PC-9 (cell line): ENCODE measurements at regions of chr3 and their contacts with region 1.

Region 1: DNA sequence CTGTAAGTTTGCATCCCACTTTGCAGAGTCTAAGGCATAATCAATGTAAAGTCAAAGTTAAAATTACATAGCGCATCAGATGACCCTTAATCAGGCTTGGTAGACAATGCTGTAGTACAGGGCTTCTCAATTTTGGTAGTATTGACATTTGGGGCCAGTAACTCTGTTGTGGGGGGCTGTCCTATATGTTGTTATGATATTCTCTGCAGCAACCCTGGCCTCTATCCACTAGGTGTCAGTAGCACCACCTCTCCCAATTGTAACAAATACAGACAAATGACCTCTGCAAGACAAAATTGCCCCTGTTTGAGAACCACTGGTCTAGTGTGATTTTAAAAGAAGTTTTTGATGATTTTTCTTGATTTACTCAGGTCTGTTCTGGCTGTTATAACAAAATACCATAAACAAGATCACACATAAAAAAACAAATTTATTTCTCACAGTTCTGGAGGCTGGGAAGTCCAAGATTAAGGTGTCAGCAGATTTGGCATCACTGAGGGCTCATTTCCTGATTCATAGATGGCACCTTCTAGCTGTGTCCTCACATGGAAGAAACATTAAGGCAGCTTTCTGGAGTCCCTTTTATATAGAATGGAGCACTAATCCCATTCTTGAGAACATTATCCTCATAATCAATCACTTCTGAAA is 37.6 kb upstream of the SLC9A9 start:
- DNase-seq: no peak
- H3K4me3 ChIP-seq: no peak overlapping the region
- H3K27ac ChIP-seq: no peak overlapping the region
- H3K4me1 ChIP-seq: no peaks in the 10 kb centered on the region
- H3K27me3 ChIP-seq: no peaks in the 10 kb centered on the region
- CTCF ChIP-seq: peak; percentile 81

Region 2: GRCh38 chr3:144770915-144771351 is 885.0 kb after region 1 on chr3:
- CTCF ChIA-PET with region 1: no interaction called
- POLR2A ChIA-PET with region 1: no interaction called
- intact Hi-C with region 1: loop called (anchors 5 kb)
- DNase-seq: no peak
- H3K4me3 ChIP-seq: no peak overlapping the region
- H3K27ac ChIP-seq: no peak overlapping the region
- H3K4me1 ChIP-seq: no peaks in the 10 kb centered on the region
- H3K27me3 ChIP-seq: no peaks in the 10 kb centered on the region
- CTCF ChIP-seq: peak; percentile 60